HAP-1 (cell line): ENCODE measurements at regions of chr22 and their contacts with region 1.

Region 1: GRCh38 chr22:21606775-21607174 is 23.0 kb downstream of the YDJC start:
- DNase-seq: no peak
- H3K4me3 ChIP-seq: no peak overlapping the region
- H3K4me1 ChIP-seq: peaks cover 5% of the 10 kb centered on the region
- H3K27me3 ChIP-seq: no peaks in the 10 kb centered on the region

Region 2: GRCh38 chr22:21657361-21658032 is 50.7 kb after region 1 on chr22:
- in situ Hi-C with region 1: loop called (anchors 5 kb)
- DNase-seq: peak; percentile 78 to 91
- H3K4me3 ChIP-seq: peak overlapping the region; percentile 43
- H3K4me1 ChIP-seq: peaks cover 16% of the 10 kb centered on the region
- H3K27me3 ChIP-seq: no peaks in the 10 kb centered on the region

Region 3: DNA sequence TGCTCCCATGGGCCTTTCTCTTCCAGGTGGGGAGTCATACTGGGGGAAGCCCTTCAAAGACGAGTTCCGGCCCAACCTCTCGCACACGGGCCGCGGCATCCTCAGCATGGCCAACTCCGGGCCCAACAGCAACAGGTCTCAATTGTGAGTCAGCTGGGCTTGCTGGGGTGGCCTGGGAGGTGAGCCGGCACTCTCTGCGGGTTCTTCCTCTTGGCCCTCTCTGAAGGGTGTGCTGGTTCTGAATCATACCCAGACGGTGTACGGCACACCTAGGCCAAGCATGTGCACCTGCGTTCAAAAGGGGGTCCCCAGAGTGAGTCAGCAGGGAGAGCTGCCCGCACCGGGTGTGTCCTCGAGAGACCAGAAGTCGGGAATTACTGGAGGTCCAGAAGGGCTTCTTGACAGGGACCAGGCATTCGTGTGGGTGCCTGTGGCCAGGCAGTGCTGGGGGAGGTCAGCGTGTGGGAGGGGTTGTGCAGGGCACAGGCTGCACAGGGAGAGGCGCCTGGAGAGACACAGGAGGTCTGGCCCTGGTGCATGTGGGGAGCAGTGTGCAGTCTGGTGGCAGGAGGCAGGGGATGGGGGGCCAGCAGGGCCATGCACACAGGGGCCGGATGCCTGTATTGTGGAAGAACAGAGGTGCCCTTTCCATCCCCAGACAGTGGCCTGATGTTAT is 82.1 kb after region 1 on chr22:
- in situ Hi-C with region 1: loop called (anchors 10 kb)
- DNase-seq: no peak
- H3K4me3 ChIP-seq: no peak overlapping the region
- H3K4me1 ChIP-seq: no peaks in the 10 kb centered on the region
- H3K27me3 ChIP-seq: no peaks in the 10 kb centered on the region